ENCODE measurements at regions of chr2 and their contacts with region 1.

Region 1: DNA sequence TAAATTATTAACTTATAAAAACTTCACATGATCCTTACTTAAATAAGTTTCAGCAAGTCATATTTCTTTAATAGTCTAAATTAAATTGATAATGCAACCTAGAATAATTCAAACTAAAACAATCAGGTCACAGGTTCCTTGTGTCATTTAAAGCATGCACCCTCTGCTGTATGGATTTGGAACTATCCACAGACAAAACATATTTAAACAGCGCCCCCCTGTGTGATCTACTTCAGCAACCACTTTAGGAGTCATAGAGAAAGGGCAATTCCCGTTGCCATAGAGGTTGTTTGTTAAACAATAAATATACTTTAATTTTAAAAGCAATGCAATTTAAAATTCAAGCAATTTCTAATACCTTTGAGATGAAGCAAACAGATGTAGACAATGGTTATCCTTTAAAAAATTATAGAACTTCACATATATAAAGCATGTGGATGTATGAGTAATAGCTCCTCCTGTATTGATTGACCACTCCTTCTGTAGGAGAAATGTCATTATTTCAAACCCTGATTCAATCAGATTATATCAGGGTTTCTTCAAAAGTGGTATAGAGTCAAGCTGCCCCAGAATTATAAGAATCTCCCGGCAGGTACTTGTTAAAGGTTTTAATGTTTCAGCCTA is 21.2 kb downstream of the GRB14 start:
- DNase-seq: no peak
- ATAC-seq: peak; percentile 54
- H3K4me3 ChIP-seq: no peak overlapping the region
- H3K4me3 Mint-ChIP-seq: no peak overlapping the region
- H3K27ac ChIP-seq: no peak overlapping the region
- H3K27ac Mint-ChIP-seq: no peak overlapping the region
- H3K4me1 ChIP-seq: no peaks in the 10 kb centered on the region
- H3K4me1 Mint-ChIP-seq: no peaks in the 10 kb centered on the region
- H3K27me3 ChIP-seq: no peaks in the 10 kb centered on the region
- H3K27me3 Mint-ChIP-seq: no peaks in the 10 kb centered on the region

Region 2: GRCh38 chr2:163171786-163172531 is 1428.1 kb before region 1 on chr2:
- CTCF ChIA-PET with region 1: no interaction called
- POLR2A ChIA-PET with region 1: no interaction called
- intact Hi-C with region 1: loop called in 1 of 2 experiments (anchors 5 kb)
- DNase-seq: no peak
- ATAC-seq: no peak
- H3K4me3 ChIP-seq: no peak overlapping the region
- H3K4me3 Mint-ChIP-seq: no peak overlapping the region
- H3K27ac ChIP-seq: no peak overlapping the region
- H3K27ac Mint-ChIP-seq: no peak overlapping the region
- H3K4me1 ChIP-seq: no peaks in the 10 kb centered on the region
- H3K4me1 Mint-ChIP-seq: no peaks in the 10 kb centered on the region
- H3K27me3 ChIP-seq: no peaks in the 10 kb centered on the region
- H3K27me3 Mint-ChIP-seq: no peaks in the 10 kb centered on the region

Region 3: GRCh38 chr2:164617466-164617865 is 17.4 kb after region 1 on chr2:
- CTCF ChIA-PET with region 1: no interaction called
- POLR2A ChIA-PET with region 1: no interaction called
- intact Hi-C with region 1: no loop called
- DNase-seq: no peak
- ATAC-seq: no peak
- H3K4me3 ChIP-seq: no peak overlapping the region
- H3K4me3 Mint-ChIP-seq: no peak overlapping the region
- H3K27ac ChIP-seq: no peak overlapping the region
- H3K27ac Mint-ChIP-seq: no peak overlapping the region
- H3K4me1 ChIP-seq: no peaks in the 10 kb centered on the region
- H3K4me1 Mint-ChIP-seq: peaks cover 0 to 10% (median 2%) of the 10 kb centered on the region in 7 donors
- H3K27me3 ChIP-seq: no peaks in the 10 kb centered on the region
- H3K27me3 Mint-ChIP-seq: peaks cover 24 to 33% (median 29%) of the 10 kb centered on the region in 5 donors

Region 4: GRCh38 chr2:164847981-164848741 is 248.1 kb after region 1 on chr2:
- CTCF ChIA-PET with region 1: no interaction called
- POLR2A ChIA-PET with region 1: no interaction called
- intact Hi-C with region 1: no loop called
- DNase-seq: no peak
- ATAC-seq: no peak
- H3K4me3 ChIP-seq: no peak overlapping the region
- H3K4me3 Mint-ChIP-seq: no peak overlapping the region
- H3K27ac ChIP-seq: no peak overlapping the region
- H3K27ac Mint-ChIP-seq: no peak overlapping the region
- H3K4me1 ChIP-seq: no peaks in the 10 kb centered on the region
- H3K4me1 Mint-ChIP-seq: no peaks in the 10 kb centered on the region
- H3K27me3 ChIP-seq: no peaks in the 10 kb centered on the region
- H3K27me3 Mint-ChIP-seq: peaks cover 10 to 42% (median 27%) of the 10 kb centered on the region in 5 donors

Measured in naive thymus-derived CD4-positive, alpha-beta T cell (primary cell).